ENCODE measurements at regions of chr2 and their contacts with region 1.

Region 1: GRCh38 chr2:207166039-207166348 is 246 bp upstream of the KLF7 start:
- DNase-seq: peak; percentile 99 to 100 (median 99)
- ATAC-seq: peak; percentile 93 to 95 (median 94)
- H3K4me3 ChIP-seq: peak overlapping the region; percentile 62 to 96 (median 80)
- H3K27ac ChIP-seq: peak overlapping the region; percentile 94 to 100 (median 100)
- H3K4me1 ChIP-seq: peaks cover 11 to 49% (median 31%) of the 10 kb centered on the region in 12 donors
- H3K27me3 ChIP-seq: no peaks in the 10 kb centered on the region
- CTCF ChIP-seq: no peak
- POLR2A ChIP-seq: no peak

Region 2: GRCh38 chr2:206981739-206982340 is 184.2 kb before region 1 on chr2:
- intact Hi-C with region 1: loop called in 9 of 10 experiments (anchors 2 to 10 kb)
- DNase-seq: peak; percentile 69 to 80 (median 72)
- ATAC-seq: peak; percentile 87 to 96 (median 93)
- H3K4me3 ChIP-seq: peak overlapping the region in 1 of 12 donors; percentile 13
- H3K27ac ChIP-seq: no peak overlapping the region
- H3K4me1 ChIP-seq: peaks cover 0 to 29% (median 16%) of the 10 kb centered on the region in 12 donors
- H3K27me3 ChIP-seq: no peaks in the 10 kb centered on the region
- CTCF ChIP-seq: peak; percentile 57 to 94 (median 87)
- POLR2A ChIP-seq: no peak

Region 3: DNA sequence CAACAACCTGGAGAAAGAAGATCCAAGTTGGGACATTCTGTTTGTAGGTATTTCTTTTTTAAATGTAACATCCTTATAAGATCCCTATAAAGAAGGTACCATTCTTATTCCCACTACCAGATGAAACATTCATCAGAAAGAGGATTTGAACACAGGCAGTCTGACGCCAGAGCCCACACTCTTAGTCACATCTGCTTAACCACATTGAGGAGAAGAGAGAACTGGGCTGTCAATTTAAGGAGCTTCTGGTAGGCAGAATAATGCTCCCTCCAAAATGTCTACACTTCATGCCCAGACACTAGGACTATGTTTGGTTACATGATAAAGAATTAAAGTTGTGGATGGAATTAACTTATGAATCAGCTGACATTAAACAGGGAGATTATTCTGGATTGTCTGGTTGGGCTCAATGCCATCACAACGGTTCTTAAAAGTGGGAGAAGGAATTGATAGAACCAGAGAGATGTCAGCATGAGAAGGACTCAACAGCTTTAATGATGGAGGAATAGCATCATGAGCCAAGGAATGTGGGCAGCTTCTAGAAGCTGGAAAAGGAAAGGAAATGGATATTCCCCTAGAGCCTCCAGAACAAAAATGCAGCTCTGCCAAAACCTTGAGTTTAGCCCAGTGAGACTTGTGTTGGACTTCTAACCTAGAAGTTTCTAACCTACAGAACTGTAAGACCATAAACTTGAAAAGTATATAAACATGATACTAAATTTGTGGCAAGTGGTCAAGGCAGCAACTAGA is 82.5 kb before region 1 on chr2:
- intact Hi-C with region 1: loop called in 3 of 10 experiments (anchors 5 kb)
- DNase-seq: no peak
- ATAC-seq: peak in 2 of 4 donors; percentile 6 to 27
- H3K4me3 ChIP-seq: no peak overlapping the region
- H3K27ac ChIP-seq: peak overlapping the region in 10 of 12 donors; percentile 19 to 57 (median 44)
- H3K4me1 ChIP-seq: peaks cover 7 to 64% (median 50%) of the 10 kb centered on the region in 12 donors
- H3K27me3 ChIP-seq: no peaks in the 10 kb centered on the region
- CTCF ChIP-seq: no peak
- POLR2A ChIP-seq: no peak

Region 4: GRCh38 chr2:207143215-207144172 is 22.5 kb before region 1 on chr2:
- intact Hi-C with region 1: loop called in 3 of 10 experiments (anchors 2 kb)
- DNase-seq: peak; percentile 71 to 85 (median 78)
- ATAC-seq: peak; percentile 80 to 92 (median 83)
- H3K4me3 ChIP-seq: peak overlapping the region in 9 of 12 donors; percentile 10 to 41 (median 29)
- H3K27ac ChIP-seq: peak overlapping the region; percentile 77 to 96 (median 87)
- H3K4me1 ChIP-seq: peaks cover 33 to 100% (median 89%) of the 10 kb centered on the region in 12 donors
- H3K27me3 ChIP-seq: no peaks in the 10 kb centered on the region
- CTCF ChIP-seq: no peak
- POLR2A ChIP-seq: no peak

Region 5: GRCh38 chr2:207202645-207203044 is 36.7 kb after region 1 on chr2:
- intact Hi-C with region 1: no loop called
- DNase-seq: no peak
- ATAC-seq: no peak
- H3K4me3 ChIP-seq: no peak overlapping the region
- H3K27ac ChIP-seq: no peak overlapping the region
- H3K4me1 ChIP-seq: no peaks in the 10 kb centered on the region
- H3K27me3 ChIP-seq: no peaks in the 10 kb centered on the region
- CTCF ChIP-seq: no peak
- POLR2A ChIP-seq: no peak

Region 6: GRCh38 chr2:207334624-207335371 is 168.8 kb after region 1 on chr2:
- intact Hi-C with region 1: loop called in 9 of 10 experiments (anchors 1 to 10 kb)
- DNase-seq: peak; percentile 66 to 87 (median 77)
- ATAC-seq: peak; percentile 61 to 86 (median 84)
- H3K4me3 ChIP-seq: peak overlapping the region in 10 of 12 donors; percentile 12 to 45 (median 36)
- H3K27ac ChIP-seq: peak overlapping the region; percentile 73 to 96 (median 90)
- H3K4me1 ChIP-seq: peaks cover 2 to 82% (median 37%) of the 10 kb centered on the region in 12 donors
- H3K27me3 ChIP-seq: no peaks in the 10 kb centered on the region
- CTCF ChIP-seq: peak in 1 of 12 donors; percentile 10
- POLR2A ChIP-seq: peak in 1 of 2 donors; percentile 32